ENCODE measurements at regions of chr7 and their contacts with region 1.

Region 1: GRCh38 chr7:47991741-47992311 is 12.4 kb upstream of the HUS1 start:
- DNase-seq: peak; percentile 51
- ATAC-seq: peak; percentile 100
- H3K4me3 ChIP-seq: peak overlapping the region; percentile 44
- H3K27ac ChIP-seq: no peak overlapping the region; the same call in 1 of the 2 replicates
- H3K4me1 ChIP-seq: no peaks in the 10 kb centered on the region; the same call in 1 of the 2 replicates
- H3K27me3 ChIP-seq: no peaks in the 10 kb centered on the region; the same call in 1 of the 2 replicates
- CTCF ChIP-seq: peak; percentile 70
- POLR2A ChIP-seq: no peak
- RAD21 ChIP-seq: peak; percentile 73

Region 2: DNA sequence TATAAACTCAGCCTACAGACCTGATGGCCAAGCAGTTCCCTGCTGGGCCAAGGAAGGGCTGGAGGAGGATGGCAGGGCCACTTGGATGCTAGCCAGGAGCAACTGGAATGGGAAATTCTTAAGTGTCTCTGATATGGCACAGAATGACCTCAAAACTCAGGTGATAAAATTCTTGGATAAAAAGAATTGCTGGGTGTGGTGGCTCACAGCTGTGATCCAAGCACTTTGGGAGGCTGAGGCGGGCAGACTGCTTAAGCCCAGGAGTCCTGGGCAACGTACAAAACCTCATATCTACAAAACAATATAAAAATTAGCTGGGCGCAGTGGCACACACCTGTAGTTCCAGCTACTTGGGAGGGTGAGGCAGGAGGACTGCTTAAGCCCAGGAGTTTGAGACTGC is 29.6 kb before region 1 on chr7:
- CTCF ChIA-PET with region 1: no interaction called
- POLR2A ChIA-PET with region 1: no interaction called
- dilution Hi-C with region 1: no loop called
- in situ Hi-C with region 1: no loop called
- intact Hi-C with region 1: loop called (anchors 2 kb)
- DNase-seq: no peak
- ATAC-seq: no peak
- H3K4me3 ChIP-seq: no peak overlapping the region
- H3K27ac ChIP-seq: no peak overlapping the region
- H3K4me1 ChIP-seq: no peaks in the 10 kb centered on the region
- H3K27me3 ChIP-seq: no peaks in the 10 kb centered on the region
- CTCF ChIP-seq: no peak
- POLR2A ChIP-seq: no peak
- RAD21 ChIP-seq: no peak

Region 3: GRCh38 chr7:48154792-48155413 is 163.1 kb after region 1 on chr7:
- CTCF ChIA-PET with region 1: interaction called, 5 read pairs
- POLR2A ChIA-PET with region 1: no interaction called
- dilution Hi-C with region 1: no loop called
- in situ Hi-C with region 1: no loop called
- intact Hi-C with region 1: loop called (anchors 1 kb)
- DNase-seq: peak; percentile 57
- ATAC-seq: peak; percentile 93
- H3K4me3 ChIP-seq: no peak overlapping the region
- H3K27ac ChIP-seq: no peak overlapping the region
- H3K4me1 ChIP-seq: peaks cover 3% of the 10 kb centered on the region; the same call in 1 of the 2 replicates
- H3K27me3 ChIP-seq: peaks cover 8% of the 10 kb centered on the region
- CTCF ChIP-seq: peak; percentile 78
- POLR2A ChIP-seq: no peak
- RAD21 ChIP-seq: peak; percentile 83

Measured in IMR-90 (cell line).